T47D (cell line): ENCODE measurements at regions of chr12 and their contacts with region 1.

Region 1: DNA sequence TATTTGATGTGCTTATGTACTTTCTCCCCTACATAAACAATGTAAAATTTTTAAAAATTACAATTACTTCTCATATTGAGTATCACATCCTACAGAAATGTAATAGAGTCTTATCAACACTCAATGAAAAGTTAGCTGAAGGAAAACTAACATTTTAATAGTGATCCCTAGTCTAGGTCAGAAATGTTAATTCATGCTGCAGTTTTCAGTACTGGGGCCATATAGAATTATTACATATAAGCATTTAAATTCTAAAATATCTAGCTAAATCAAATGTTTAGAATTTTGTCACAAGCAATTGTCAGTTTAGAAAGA is 37.8 kb downstream of the SLC6A15 start:
- DNase-seq: no peak

Region 2: DNA sequence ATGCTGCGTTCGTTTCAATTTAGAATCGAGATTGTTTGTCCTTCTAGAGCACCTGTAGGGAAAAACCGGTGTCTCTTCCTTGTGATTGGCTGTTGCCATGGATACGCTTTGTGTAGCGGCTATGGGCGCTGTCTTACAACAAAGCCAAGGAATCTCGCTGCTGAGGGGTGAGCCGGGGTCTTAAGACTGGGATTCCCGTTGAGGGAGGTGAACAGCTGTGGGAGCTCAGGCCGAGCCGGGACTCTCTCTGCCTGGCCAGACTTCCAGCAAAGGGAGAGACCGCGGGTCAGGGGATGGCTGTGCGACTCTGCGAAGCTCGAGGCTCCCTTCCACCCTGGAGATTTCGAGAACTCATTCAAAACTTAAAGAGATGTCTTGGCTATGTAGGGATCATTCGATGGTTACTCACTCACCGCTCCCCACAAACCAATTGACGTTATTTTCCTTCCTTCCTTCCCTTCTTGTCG is 161.5 kb after region 1 on chr12 and contains the starts of genes LRRIQ1 and TSPAN19:
- in situ Hi-C with region 1: loop called (anchors 25 kb)
- DNase-seq: peak; percentile 70 to 95